Common myeloid progenitor, CD34-positive (primary cell): ENCODE measurements at regions of chr6 and their contacts with region 1.

Region 1: GRCh38 chr6:2988426-2989331 is 11.0 kb upstream of the NQO2 start:
- DNase-seq: peak; percentile 86 to 92 (median 89)
- H3K4me3 ChIP-seq: peak overlapping the region; percentile 65 to 98 (median 80)
- H3K27ac ChIP-seq: peak overlapping the region; percentile 98 to 99
- H3K4me1 ChIP-seq: peaks cover 12 to 49% (median 37%) of the 10 kb centered on the region in 4 experiments
- H3K27me3 ChIP-seq: no peaks in the 10 kb centered on the region

Region 2: GRCh38 chr6:2791124-2791974 is 197.3 kb before region 1 on chr6:
- CTCF ChIA-PET with region 1: interaction called, 35 read pairs
- POLR2A ChIA-PET with region 1: interaction called, 3 read pairs
- DNase-seq: peak; percentile 87 to 89 (median 89)
- H3K4me3 ChIP-seq: peak overlapping the region in 1 of 7 experiments; percentile 25
- H3K27ac ChIP-seq: peak overlapping the region in 1 of 2 experiments; percentile 66
- H3K4me1 ChIP-seq: peaks cover 18 to 63% (median 56%) of the 10 kb centered on the region in 4 experiments
- H3K27me3 ChIP-seq: no peaks in the 10 kb centered on the region

Region 3: GRCh38 chr6:2848851-2849250 is 139.8 kb before region 1 on chr6:
- CTCF ChIA-PET with region 1: interaction called, 71 read pairs
- POLR2A ChIA-PET with region 1: interaction called, 6 read pairs
- DNase-seq: no peak
- H3K4me3 ChIP-seq: no peak overlapping the region
- H3K27ac ChIP-seq: no peak overlapping the region
- H3K4me1 ChIP-seq: peaks cover 7 to 16% (median 8%) of the 10 kb centered on the region in 4 experiments
- H3K27me3 ChIP-seq: no peaks in the 10 kb centered on the region

Region 4: DNA sequence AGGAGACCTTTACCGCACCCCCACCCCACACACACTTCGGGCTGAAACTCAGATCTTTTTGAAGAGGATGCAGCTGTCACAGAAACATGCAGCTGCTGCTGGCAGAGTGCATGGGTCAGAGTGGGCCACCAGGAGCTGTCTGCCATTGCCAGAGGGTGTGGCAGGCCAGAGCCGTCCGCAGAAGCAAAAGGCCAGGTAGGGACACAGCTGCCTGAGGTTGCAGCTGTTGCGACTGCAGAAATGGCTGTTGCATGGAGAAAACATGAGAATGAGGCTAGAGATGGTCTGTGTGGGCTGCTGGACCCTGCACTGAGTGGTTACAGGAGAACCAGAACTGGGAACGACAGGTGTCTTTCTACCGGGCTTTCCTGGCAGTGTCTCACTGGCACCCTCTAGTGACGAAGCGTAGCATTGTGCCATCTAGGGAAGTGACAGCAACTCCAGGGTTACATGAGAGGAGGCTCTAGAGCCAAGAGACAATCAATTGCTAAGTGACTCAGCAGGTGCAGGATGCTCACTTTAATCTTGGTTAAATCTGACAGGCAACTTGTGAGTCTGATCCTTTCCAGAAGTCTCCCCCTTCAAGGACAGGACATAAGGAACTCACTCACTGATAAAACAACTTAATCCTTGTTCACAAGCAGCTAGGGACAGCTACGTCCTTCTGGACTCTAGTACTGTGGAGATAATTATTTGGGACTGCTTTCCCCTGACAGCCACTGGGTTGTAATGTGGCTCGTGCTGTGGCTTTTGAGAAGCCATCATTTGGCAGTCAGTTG is 56.5 kb before region 1 on chr6:
- CTCF ChIA-PET with region 1: interaction called, 11 read pairs
- POLR2A ChIA-PET with region 1: no interaction called
- DNase-seq: peak; percentile 84 to 91 (median 90)
- H3K4me3 ChIP-seq: peak overlapping the region in 4 of 7 experiments; percentile 21 to 67 (median 52)
- H3K27ac ChIP-seq: no peak overlapping the region
- H3K4me1 ChIP-seq: peaks cover 0 to 21% (median 10%) of the 10 kb centered on the region in 4 experiments
- H3K27me3 ChIP-seq: no peaks in the 10 kb centered on the region

Region 5: DNA sequence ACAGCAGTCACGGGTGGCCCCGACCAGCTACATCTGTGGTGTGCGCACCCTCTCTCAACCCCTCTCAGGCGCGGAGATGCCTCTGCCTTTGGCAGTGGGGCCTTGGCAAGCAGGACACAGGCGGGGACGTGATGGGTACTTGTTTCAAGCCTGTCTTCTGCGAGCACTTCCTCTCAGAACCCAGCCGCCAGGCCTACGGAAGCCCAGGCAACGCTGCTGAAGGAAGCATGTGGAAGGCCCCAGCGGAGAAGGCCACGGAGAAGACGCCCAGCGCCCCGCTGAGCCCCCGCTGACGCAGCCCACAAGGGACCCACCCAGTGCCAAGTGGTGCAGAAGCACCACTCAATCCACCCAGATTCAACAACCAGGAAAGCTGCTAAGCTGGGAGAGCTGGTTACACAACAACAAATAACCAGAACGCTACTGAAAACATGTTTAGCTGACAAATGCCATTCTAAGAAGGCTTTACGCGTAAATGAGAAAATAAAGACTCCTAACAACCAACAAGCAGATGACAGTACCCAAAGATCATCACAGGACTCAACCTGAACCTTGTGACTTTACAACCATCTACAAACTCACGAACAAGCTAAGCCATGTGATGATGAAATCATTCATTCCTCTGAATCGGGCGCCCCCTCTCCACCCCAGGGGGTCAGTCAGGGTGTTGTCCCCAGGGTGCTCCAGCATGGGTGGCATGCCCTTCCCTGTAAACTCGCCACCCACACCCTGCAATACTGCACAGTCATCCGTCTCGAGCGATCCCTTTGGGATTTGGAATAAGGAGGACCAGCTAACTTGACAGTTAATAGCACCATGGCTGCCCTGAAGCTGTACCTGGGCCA is 30.1 kb before region 1 on chr6:
- CTCF ChIA-PET with region 1: interaction called, 20 read pairs
- POLR2A ChIA-PET with region 1: interaction called, 12 read pairs
- DNase-seq: peak; percentile 55 to 87 (median 82)
- H3K4me3 ChIP-seq: peak overlapping the region in 2 of 7 experiments; percentile 9 to 43
- H3K27ac ChIP-seq: peak overlapping the region; percentile 13 to 73
- H3K4me1 ChIP-seq: peaks cover 0 to 60% (median 34%) of the 10 kb centered on the region in 4 experiments
- H3K27me3 ChIP-seq: no peaks in the 10 kb centered on the region

Region 6: DNA sequence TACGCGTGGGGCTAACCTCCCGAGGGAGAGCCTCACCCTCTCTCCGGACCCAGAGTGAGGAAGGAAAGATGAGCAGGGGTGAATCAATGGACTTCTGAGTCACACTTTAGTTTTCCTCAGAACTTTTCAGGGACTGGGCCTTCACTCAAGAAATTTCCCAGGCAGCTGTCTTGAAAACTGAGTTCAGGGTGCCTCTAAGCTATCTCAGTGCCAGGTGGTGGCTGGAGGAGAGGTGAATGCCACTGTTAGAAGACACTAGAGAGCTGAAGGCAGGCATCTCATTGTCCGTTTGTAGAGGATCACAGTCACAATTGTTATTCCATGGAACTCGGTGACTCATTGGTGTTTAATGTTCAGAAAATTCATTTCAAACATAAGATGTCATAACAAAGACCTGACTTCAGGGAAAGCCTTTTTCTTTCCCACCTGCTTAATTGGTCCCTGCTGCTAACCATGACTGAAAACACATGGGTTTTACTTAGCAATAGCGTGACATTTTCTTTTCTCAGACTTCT is 12.1 kb before region 1 on chr6:
- CTCF ChIA-PET with region 1: interaction called, 45 read pairs
- POLR2A ChIA-PET with region 1: interaction called, 3 read pairs
- DNase-seq: no peak
- H3K4me3 ChIP-seq: no peak overlapping the region
- H3K27ac ChIP-seq: no peak overlapping the region
- H3K4me1 ChIP-seq: peaks cover 8 to 35% (median 14%) of the 10 kb centered on the region in 4 experiments
- H3K27me3 ChIP-seq: no peaks in the 10 kb centered on the region

Region 7: GRCh38 chr6:3031857-3032640 is 43.4 kb after region 1 on chr6:
- CTCF ChIA-PET with region 1: no interaction called
- POLR2A ChIA-PET with region 1: no interaction called
- DNase-seq: peak in 1 of 3 donors; percentile 43
- H3K4me3 ChIP-seq: no peak overlapping the region
- H3K27ac ChIP-seq: no peak overlapping the region
- H3K4me1 ChIP-seq: peaks cover 0 to 7% (median 3%) of the 10 kb centered on the region in 4 experiments
- H3K27me3 ChIP-seq: no peaks in the 10 kb centered on the region

Region 8: GRCh38 chr6:3063733-3064700 is 75.3 kb after region 1 on chr6:
- CTCF ChIA-PET with region 1: interaction called, 4 read pairs
- POLR2A ChIA-PET with region 1: interaction called, 11 read pairs
- DNase-seq: peak; percentile 93 to 97 (median 95)
- H3K4me3 ChIP-seq: peak overlapping the region; percentile 74 to 94 (median 87)
- H3K27ac ChIP-seq: peak overlapping the region in 1 of 2 experiments; percentile 71
- H3K4me1 ChIP-seq: peaks cover 2 to 20% (median 13%) of the 10 kb centered on the region in 4 experiments
- H3K27me3 ChIP-seq: no peaks in the 10 kb centered on the region

Region 9: DNA sequence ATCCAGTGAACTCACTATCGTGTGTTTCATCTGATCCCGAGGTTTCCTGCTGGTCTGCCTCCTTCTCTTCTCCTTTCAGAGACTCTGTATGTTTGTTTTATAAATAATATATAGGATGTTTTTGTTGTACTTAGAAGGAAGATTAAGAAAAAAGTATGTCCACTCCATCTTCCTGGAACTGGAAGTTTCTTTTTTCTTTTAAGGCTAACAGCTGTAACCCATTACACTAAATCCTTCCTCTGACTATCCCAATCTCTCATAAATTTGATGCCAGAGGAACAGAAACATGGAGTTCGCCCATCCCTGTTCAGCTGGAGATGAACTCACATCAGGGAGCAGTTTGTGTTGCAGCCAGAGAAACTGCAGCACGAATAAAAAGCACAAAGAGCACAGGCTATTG is 100.3 kb after region 1 on chr6:
- CTCF ChIA-PET with region 1: no interaction called
- POLR2A ChIA-PET with region 1: no interaction called
- DNase-seq: no peak
- H3K4me3 ChIP-seq: no peak overlapping the region
- H3K27ac ChIP-seq: no peak overlapping the region
- H3K4me1 ChIP-seq: no peaks in the 10 kb centered on the region
- H3K27me3 ChIP-seq: no peaks in the 10 kb centered on the region